ENCODE measurements at regions of chr10 and their contacts with region 1.

Region 1: DNA sequence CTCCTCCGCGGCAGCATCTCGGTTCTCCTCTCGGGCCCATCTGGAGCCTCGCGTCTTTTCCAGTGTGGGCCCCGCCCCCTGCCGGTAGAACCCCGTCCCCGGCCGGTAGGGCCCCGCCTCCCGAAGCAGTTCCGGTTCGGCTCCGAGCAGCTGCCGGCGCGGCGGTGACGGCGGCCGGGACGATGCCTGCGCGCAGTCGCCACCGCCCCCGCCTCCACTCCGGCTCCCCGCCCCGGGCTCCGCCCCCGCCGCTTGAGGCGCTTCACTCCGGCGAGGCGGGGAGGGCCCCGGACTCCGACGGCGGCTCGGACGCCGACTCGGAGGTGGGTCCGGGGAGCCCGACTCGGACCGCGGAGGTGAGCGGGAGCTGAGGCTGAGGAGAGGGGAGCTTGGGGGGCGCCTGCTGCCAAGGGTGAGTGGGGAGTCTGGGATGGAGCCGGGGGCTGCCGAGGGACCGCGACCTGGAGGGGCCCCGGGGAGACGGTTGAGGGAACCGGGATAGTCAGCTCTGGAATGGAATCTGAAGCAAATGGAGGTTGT is at the start of gene SAMD8:
- DNase-seq: peak; percentile 94 to 99
- H3K4me3 ChIP-seq: peak within 1 kb of the TSS; percentile 95
- H3K27ac ChIP-seq: peak within 1 kb of the TSS; percentile 88
- H3K4me1 ChIP-seq: peaks cover 35% of the 10 kb centered on the region
- H3K27me3 ChIP-seq: no peaks in the 10 kb centered on the region
- CTCF ChIP-seq: peak; percentile 43
- total RNA-seq, gene SAMD8: 27.6 and 31.1 TPM in 2 replicates

Region 2: DNA sequence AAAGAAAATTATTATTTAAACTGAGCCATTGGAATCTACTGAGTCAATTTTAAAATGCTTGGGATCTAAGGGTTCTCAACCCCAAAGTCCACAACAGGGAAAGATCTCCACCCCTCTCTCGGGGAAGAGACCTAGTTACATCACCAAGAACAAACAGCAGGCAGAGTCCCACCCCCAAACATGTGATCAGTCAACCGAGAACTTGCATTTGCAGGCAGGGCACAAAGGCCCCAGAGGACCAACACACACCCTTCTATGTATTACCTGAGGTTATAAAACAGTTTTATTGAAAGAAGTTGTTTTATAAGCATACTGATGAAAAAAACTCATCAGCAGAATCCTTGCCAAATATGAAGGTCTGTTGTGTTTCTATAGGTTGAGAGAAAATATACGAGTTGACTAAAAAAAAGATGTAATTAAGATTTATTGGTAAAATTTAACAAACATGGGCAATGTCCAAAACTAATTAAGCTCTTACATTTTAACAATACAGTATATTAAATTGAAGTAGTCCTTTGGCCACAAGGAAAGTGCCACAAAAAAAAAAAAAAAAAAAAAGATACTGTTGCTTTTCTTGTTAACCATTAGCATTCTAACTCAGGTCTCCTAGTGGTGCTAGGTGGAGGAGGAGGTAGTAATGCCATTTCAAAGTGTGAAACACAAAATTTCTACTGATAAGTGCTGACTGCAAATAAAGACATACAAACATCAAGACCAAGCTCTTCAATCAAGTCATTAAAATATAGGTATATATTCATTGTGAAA is 1519.3 kb before region 1 on chr10:
- CTCF ChIA-PET with region 1: no interaction called
- POLR2A ChIA-PET with region 1: interaction called, 18 read pairs
- intact Hi-C with region 1: no loop called
- DNase-seq: peak; percentile 30 to 57
- H3K4me3 ChIP-seq: peak overlapping the region; percentile 28; the same call in 1 of the 2 replicates
- H3K27ac ChIP-seq: peak overlapping the region; percentile 84
- H3K4me1 ChIP-seq: peaks cover 60% of the 10 kb centered on the region
- H3K27me3 ChIP-seq: no peaks in the 10 kb centered on the region
- CTCF ChIP-seq: no peak

Region 3: GRCh38 chr10:73785221-73785720 is 1326.2 kb before region 1 on chr10 and contains the start of gene ZSWIM8:
- CTCF ChIA-PET with region 1: no interaction called
- POLR2A ChIA-PET with region 1: no interaction called
- intact Hi-C with region 1: loop called (anchors 2 kb)
- DNase-seq: peak; percentile 80 to 93
- H3K4me3 ChIP-seq: peak within 1 kb of the TSS; percentile 58
- H3K27ac ChIP-seq: 0 out of 2 replicates have a peak within 1 kb of the TSS, but pooled peaks have one; percentile 14
- H3K4me1 ChIP-seq: peaks cover 35% of the 10 kb centered on the region
- H3K27me3 ChIP-seq: no peaks in the 10 kb centered on the region
- CTCF ChIP-seq: no peak
- total RNA-seq, gene ZSWIM8: 49.2 and 70.0 TPM in 2 replicates

Region 4: DNA sequence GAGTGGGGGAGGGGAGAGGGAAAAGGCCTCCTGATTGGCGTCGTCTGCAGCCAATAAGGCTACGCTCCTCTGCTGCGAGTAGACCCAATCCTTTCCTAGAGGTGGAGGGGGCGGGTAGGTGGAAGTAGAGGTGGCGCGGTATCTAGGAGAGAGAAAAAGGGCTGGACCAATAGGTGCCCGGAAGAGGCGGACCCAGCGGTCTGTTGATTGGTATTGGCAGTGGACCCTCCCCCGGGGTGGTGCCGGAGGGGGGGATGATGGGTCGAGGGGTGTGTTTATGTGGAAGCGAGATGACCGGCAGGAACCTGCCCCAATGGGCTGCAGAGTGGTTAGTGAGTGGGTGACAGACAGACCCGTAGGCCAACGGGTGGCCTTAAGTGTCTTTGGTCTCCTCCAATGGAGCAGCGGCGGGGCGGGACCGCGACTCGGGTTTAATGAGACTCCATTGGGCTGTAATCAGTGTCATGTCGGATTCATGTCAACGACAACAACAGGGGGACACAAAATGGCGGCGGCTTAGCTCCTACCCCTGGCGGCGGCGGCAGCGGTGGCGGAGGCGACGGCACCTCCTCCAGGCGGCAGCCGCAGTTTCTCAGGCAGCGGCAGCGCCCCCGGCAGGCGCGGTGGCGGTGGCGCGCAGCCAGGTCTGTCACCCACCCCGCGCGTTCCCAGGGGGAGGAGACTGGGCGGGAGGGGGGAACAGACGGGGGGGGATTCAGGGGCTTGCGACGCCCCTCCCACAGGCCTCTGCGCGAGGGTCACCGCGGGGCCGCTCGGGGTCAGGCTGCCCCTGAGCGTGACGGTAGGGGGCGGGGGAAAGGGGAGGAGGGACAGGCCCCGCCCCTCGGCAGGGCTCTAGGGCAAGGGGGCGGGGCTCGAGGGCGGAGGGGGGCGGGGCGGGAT is 285.0 kb before region 1 on chr10 and contains the start of gene KAT6B:
- CTCF ChIA-PET with region 1: no interaction called
- POLR2A ChIA-PET with region 1: no interaction called
- intact Hi-C with region 1: loop called (anchors 5 kb)
- DNase-seq: peak; percentile 99 to 100
- H3K4me3 ChIP-seq: peak within 1 kb of the TSS; percentile 85
- H3K27ac ChIP-seq: peak within 1 kb of the TSS; percentile 91
- H3K4me1 ChIP-seq: peaks cover 19% of the 10 kb centered on the region
- H3K27me3 ChIP-seq: no peaks in the 10 kb centered on the region
- CTCF ChIP-seq: peak; percentile 38; the same call in 1 of the 2 replicates
- total RNA-seq, gene KAT6B: 26.3 and 30.9 TPM in 2 replicates

Region 5: DNA sequence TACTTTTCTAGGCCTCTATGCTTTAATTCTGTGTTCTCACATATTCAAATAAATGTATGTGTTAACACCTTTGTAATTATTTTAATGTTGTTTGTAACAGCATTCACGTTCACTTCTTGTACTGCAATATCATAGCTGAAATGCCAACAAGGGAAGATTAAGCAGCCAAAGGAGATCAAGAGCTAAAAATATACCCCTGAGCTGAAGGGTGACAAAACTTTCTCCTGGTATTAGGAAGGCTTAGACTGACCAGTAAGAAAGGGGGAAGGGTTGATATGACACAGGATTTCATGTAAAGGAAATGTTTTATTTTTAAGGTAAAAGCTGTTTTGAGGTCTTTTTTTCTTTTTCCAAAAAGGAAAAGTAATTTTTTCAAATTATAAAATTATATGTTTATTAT is 58.8 kb after region 1 on chr10:
- CTCF ChIA-PET with region 1: no interaction called
- POLR2A ChIA-PET with region 1: no interaction called
- intact Hi-C with region 1: no loop called
- DNase-seq: no peak
- H3K4me3 ChIP-seq: no peak overlapping the region
- H3K27ac ChIP-seq: no peak overlapping the region
- H3K4me1 ChIP-seq: peaks cover 10% of the 10 kb centered on the region
- H3K27me3 ChIP-seq: no peaks in the 10 kb centered on the region
- CTCF ChIP-seq: no peak

Region 6: GRCh38 chr10:75187961-75188426 is 76.6 kb after region 1 on chr10:
- CTCF ChIA-PET with region 1: no interaction called
- POLR2A ChIA-PET with region 1: no interaction called
- intact Hi-C with region 1: loop called (anchors 1 kb)
- DNase-seq: peak; percentile 73 to 96
- H3K4me3 ChIP-seq: no peak overlapping the region; the same call in 1 of the 2 replicates
- H3K27ac ChIP-seq: peak overlapping the region; percentile 49
- H3K4me1 ChIP-seq: peaks cover 57% of the 10 kb centered on the region
- H3K27me3 ChIP-seq: no peaks in the 10 kb centered on the region
- CTCF ChIP-seq: peak; percentile 84

Region 7: DNA sequence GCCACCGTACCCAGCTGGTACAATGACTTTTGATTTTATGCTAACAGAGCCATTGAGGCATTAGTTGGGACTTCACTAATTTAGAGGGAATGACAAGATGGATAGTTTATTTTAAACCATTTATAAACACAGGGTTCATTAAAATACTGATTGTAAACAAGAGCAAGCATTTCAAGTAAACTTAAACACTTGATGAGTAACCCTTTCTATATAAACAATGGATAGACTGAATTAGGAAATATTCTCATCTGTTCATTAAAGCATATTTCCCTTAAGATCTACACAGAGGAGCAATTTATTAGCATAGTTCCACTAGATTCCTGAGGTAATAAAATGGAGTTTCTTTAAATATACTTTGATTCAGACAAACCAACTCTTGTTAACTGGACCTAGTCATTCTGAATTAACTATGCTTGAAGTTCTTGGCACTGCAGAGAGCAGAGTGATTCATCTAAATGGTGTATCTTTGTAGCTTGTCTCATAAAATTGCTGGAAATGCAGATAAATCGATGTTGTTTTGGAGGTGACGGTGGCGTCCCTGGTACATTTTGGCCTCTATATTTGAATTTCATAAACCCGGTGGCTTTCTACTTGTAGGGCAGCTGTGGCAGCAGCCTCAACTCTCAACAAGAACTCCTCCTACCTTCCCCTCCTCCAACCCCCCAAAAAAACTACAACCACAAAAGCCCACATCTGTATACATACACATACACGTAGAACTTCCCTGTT is 83.8 kb after region 1 on chr10:
- CTCF ChIA-PET with region 1: no interaction called
- POLR2A ChIA-PET with region 1: interaction called, 11 read pairs
- intact Hi-C with region 1: no loop called
- DNase-seq: peak in 1 of 2 experiments; percentile 57
- H3K4me3 ChIP-seq: no peak overlapping the region
- H3K27ac ChIP-seq: no peak overlapping the region
- H3K4me1 ChIP-seq: peaks cover 36% of the 10 kb centered on the region
- H3K27me3 ChIP-seq: no peaks in the 10 kb centered on the region
- CTCF ChIP-seq: no peak

Region 8: DNA sequence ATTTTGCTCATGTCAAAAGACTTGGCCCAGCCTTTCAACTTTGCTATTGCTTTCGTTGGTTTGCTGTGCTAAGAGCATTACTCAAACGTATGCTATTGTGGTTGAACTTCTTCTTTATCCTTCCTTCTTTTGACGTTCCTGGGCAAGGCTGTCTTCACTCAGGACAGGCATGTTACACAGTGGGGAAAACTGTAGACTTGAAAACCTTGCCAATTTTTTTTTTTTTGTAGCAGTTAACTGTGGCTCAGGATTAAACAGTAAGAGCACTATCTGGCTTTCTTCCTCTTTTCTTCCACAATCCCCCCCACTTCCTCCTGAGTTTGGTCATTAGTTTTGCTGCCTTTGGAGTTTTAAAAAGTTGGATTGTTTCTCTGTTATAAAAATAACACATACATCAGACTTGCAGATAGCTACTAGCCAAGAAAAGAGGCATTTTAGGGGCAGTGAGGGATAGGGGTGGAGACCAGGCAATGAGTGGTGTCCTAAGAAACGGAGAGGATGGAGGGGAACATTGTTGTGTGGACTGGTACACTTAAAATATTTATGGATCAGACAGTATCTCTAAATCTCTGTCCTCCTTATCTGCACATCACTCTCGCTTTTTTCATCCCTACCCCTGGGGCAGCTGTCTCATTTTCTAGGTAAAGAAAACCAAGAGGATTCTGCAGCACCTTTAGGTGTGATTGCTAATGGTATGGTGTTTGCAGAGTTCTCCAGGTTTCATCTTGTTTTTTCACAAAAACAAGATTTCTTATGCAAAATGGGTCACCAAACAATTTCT is 501.7 kb after region 1 on chr10:
- CTCF ChIA-PET with region 1: no interaction called
- POLR2A ChIA-PET with region 1: no interaction called
- intact Hi-C with region 1: no loop called
- DNase-seq: no peak
- H3K4me3 ChIP-seq: no peak overlapping the region
- H3K27ac ChIP-seq: no peak overlapping the region
- H3K4me1 ChIP-seq: no peaks in the 10 kb centered on the region
- H3K27me3 ChIP-seq: no peaks in the 10 kb centered on the region
- CTCF ChIP-seq: no peak

Measured in PC-9 (cell line).